ENCODE measurements at regions of chr1 and their contacts with region 1.

Region 1: GRCh38 chr1:174982971-174983689 is 16.6 kb upstream of the CACYBP start:
- DNase-seq: no peak
- H3K4me3 ChIP-seq: no peak overlapping the region
- H3K27ac ChIP-seq: no peak overlapping the region
- H3K4me1 ChIP-seq: no peaks in the 10 kb centered on the region
- H3K27me3 ChIP-seq: no peaks in the 10 kb centered on the region
- CTCF ChIP-seq: peak; percentile 76

Region 2: GRCh38 chr1:174676856-174677255 is 306.3 kb before region 1 on chr1:
- intact Hi-C with region 1: no loop called
- DNase-seq: no peak
- H3K4me3 ChIP-seq: no peak overlapping the region
- H3K27ac ChIP-seq: no peak overlapping the region
- H3K4me1 ChIP-seq: peaks cover 3% of the 10 kb centered on the region
- H3K27me3 ChIP-seq: no peaks in the 10 kb centered on the region
- CTCF ChIP-seq: no peak

Region 3: DNA sequence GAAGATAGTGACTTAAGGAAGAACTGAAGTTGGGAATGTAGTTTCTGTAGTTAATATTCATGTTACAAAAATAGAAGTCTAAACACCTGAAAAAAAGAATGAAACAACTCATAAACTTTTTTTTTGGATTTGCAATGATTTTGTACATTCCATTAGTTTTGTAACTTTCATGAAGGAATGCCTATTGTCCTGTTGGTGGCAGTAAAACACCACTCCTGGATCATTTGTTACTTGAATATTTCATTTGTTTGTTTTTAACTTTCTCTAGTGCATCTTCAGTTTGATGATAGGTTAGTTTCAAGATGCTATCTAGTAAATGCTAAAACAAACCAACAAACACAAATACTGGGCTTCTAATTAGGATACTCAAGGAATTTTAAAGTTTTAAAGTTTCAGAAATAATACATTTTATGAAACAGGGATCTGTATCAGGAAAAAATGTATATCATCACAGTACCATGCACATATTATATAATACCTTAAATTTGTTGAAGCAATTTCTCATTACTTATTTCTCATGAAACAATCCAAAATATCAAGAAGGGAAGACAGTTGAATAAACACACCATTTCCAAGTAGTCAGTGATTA is 213.1 kb before region 1 on chr1:
- intact Hi-C with region 1: loop called (anchors 5 kb)
- DNase-seq: no peak
- H3K4me3 ChIP-seq: no peak overlapping the region
- H3K27ac ChIP-seq: no peak overlapping the region
- H3K4me1 ChIP-seq: peaks cover 6% of the 10 kb centered on the region
- H3K27me3 ChIP-seq: no peaks in the 10 kb centered on the region
- CTCF ChIP-seq: peak; percentile 79

Region 4: GRCh38 chr1:174902531-174903099 is 80.5 kb before region 1 on chr1:
- intact Hi-C with region 1: no loop called
- DNase-seq: no peak
- H3K4me3 ChIP-seq: no peak overlapping the region
- H3K27ac ChIP-seq: no peak overlapping the region
- H3K4me1 ChIP-seq: peaks cover 17% of the 10 kb centered on the region
- H3K27me3 ChIP-seq: no peaks in the 10 kb centered on the region
- CTCF ChIP-seq: no peak

Region 5: DNA sequence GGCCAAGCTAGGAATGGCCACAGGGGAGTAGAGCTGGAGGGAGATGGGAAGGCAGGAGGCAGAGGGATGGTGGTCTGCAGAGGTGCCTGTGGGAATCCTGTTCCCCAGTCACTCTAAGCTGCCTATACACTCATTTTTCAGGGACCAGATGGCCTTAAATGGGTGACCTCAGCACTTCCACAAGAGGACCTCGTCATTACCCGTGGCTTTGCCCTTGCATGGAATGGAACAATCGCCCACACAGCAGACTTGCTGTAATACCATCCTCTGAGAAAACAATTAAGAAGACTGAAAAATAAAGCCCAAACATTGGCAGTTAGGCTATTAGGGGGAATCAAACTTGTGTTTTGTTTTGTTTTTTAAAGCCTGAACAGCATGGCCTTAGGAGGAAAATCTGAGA is 71.6 kb after region 1 on chr1:
- intact Hi-C with region 1: no loop called
- DNase-seq: no peak
- H3K4me3 ChIP-seq: no peak overlapping the region
- H3K27ac ChIP-seq: no peak overlapping the region
- H3K4me1 ChIP-seq: no peaks in the 10 kb centered on the region
- H3K27me3 ChIP-seq: peaks cover 28% of the 10 kb centered on the region
- CTCF ChIP-seq: no peak

Measured in left ventricle myocardium inferior (tissue), 1 donor.